PC-9 (cell line): ENCODE measurements at regions of chr6 and their contacts with region 1.

Region 1: DNA sequence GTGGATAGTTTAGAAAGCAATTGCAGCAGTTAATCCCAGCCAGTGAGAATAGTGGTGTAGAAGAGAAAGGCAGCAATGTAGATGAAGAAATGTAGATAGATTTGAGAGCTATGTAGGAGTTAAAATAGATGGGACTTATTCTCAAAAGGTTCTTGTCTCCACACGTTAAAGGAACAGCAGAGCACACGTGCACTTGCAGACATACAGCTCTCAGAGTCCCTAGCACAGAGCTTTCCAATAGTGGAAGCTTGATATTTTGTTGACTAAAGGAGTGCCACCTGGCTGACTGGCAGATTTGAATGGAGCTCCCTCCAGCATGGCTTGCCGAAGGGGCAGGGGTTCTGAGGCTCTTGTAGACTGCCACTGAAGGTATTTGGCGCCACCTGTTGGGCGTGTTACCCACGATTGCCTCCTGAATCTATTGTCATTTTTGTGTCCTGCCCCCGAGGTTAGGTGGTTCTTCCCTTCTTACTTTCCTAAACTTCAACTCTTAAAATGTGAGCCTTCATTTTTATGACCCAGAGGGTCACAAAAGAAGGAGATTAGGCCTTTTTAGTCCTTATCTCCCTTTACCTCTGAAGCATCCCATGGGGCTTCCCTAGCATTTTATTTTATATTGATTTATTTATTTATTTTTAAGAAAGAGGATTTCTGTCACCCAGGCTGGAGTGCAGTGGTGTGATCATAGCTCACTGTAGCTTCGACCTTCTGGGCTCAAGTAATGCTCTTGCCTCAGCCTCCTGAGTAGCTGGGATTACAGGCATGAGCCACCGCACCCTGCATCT is 16.4 kb downstream of the BRD2 start:
- DNase-seq: peak; percentile 85
- H3K4me3 ChIP-seq: no peak overlapping the region
- H3K27ac ChIP-seq: no peak overlapping the region
- H3K4me1 ChIP-seq: 0 out of 2 replicates have a peak, but pooled peaks cover 4% of the 10 kb centered on the region
- H3K27me3 ChIP-seq: 0 out of 2 replicates have a peak, but pooled peaks cover 18% of the 10 kb centered on the region
- CTCF ChIP-seq: peak; percentile 89

Region 2: DNA sequence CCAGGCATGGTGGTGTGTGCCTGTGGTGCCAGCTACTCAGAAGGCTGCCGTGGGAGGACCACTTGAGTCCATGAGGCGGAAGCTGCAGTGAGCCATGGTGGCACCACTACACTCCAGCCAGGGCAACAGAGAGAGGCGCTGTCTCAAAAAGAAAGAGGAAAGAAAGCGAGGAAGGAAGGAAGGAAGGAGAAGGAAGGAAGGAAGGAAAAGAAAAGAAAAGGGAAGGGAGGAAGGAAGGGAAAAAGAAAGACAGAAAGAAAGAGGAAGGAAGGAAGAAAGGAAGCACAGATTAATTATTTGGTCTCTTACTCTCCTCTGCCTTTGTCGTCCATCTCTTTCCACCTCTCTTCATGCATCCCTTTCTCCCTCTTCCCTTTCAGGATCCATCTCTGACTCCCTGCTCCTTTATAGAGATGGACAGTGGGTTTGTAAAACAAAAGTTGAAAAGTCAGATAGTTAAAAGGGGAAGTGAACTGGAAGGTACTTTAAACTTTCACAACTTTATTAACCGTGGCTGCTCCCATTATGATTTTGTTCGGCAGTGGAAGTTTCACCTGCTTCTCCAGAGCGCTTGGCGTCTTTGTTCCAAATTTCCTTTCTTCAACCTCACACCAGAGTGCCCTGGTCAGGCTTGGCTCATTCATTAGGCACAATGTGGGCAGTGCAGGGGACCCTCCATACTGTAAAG is 346.1 kb before region 1 on chr6:
- CTCF ChIA-PET with region 1: no interaction called
- POLR2A ChIA-PET with region 1: no interaction called
- intact Hi-C with region 1: no loop called
- DNase-seq: no peak
- H3K4me3 ChIP-seq: no peak overlapping the region
- H3K27ac ChIP-seq: no peak overlapping the region
- H3K4me1 ChIP-seq: no peaks in the 10 kb centered on the region
- H3K27me3 ChIP-seq: peaks cover 25% of the 10 kb centered on the region
- CTCF ChIP-seq: no peak

Region 3: GRCh38 chr6:32885698-32886286 is 99.0 kb before region 1 on chr6:
- CTCF ChIA-PET with region 1: interaction called, 8 read pairs
- POLR2A ChIA-PET with region 1: interaction called, 5 read pairs
- intact Hi-C with region 1: loop called (anchors 1 kb)
- DNase-seq: peak in 1 of 2 experiments; percentile 54
- H3K4me3 ChIP-seq: no peak overlapping the region
- H3K27ac ChIP-seq: no peak overlapping the region
- H3K4me1 ChIP-seq: no peaks in the 10 kb centered on the region
- H3K27me3 ChIP-seq: 0 out of 2 replicates have a peak, but pooled peaks cover 7% of the 10 kb centered on the region
- CTCF ChIP-seq: peak; percentile 82

Region 4: DNA sequence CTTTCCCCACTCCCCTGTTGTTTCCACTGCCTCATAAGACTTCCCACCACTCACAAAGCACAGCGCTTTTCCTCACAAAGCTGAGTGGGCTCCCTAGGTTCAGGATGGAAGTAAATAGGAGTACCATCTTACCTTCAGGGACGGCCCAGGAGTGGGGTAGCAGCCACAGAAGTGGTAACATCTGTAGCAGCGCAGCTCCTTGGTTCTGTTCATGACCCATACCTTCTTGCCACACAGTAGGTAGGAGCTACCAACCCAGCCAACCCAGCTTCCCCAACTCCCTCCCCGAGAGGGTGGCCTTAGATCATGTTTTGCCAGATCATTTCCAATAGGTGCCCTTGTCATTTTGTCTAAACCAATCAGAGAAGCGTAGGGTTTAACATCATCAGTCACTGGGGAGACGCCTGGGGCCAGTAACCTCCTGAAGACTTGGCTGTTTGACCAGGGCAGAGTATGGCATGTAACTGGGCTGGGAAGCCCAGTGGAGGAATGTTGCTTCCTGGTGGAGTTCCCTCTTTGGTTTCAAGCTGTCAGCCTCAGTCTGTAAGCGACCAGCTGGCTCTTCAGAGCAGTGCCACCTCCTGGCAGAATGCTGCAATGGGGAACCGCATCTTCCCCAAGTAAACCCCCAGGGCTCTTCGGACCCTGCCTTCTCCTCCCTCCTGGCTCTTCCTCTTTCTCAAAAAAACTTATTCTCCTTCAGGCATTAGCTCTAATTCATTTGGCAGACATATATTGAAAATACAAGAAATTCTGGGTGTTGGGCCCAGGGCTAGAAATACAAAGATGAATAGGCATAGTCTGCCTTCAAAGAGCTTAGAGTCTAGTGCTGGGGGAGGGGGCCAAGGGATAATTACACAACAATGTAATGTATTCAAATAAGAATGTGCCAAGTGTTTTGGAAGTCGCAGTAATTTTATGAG is 31.7 kb before region 1 on chr6 and contains the start of gene HLA-DMA:
- CTCF ChIA-PET with region 1: interaction called, 18 read pairs
- POLR2A ChIA-PET with region 1: interaction called, 3 read pairs
- intact Hi-C with region 1: no loop called
- DNase-seq: peak; percentile 88 to 94
- H3K4me3 ChIP-seq: no peak within 1 kb of the TSS
- H3K27ac ChIP-seq: no peak within 1 kb of the TSS
- H3K4me1 ChIP-seq: peaks cover 4% of the 10 kb centered on the region
- H3K27me3 ChIP-seq: no peaks in the 10 kb centered on the region
- CTCF ChIP-seq: peak; percentile 81
- total RNA-seq, gene HLA-DMA: 18.3 and 22.1 TPM in 2 replicates

Region 5: DNA sequence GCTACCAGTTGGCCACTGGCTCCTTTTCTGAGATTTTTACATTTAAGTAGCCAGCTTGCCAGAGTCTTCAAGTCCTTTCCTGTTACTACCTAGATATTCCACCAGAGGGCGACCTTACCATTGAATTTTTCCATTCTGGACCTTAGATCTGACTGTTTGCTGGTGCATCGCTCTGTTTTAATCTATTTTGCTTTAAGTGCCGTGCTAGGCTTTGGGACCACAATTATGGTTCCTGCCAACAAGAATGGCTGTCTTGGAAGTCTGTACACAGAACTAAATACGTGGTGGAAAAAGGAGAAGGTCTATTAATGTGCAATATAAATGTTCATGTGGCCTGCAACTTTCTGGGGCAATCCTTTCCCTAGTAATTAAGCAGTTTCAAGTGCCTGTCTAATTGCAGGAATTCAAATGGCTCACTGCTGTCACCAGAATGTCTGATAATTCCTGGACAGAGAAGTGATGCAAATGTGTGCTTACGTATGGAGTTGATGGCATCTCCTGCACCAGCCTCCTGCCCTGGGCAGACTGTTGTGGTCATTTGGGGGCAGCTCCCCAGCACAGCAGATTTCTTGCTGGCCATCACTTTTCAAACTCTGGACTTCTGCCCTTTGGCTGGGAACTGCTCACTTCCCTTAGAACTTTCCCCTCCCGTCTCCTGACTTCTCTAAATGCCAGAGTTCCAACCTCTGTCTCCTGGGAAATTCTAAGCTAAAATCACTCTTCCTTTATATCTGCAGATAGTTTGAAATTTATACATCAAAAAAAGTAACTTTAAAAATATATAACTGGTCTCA is 30.2 kb after region 1 on chr6:
- CTCF ChIA-PET with region 1: no interaction called
- POLR2A ChIA-PET with region 1: no interaction called
- intact Hi-C with region 1: no loop called
- DNase-seq: peak; percentile 45 to 52
- H3K4me3 ChIP-seq: no peak overlapping the region
- H3K27ac ChIP-seq: no peak overlapping the region
- H3K4me1 ChIP-seq: no peaks in the 10 kb centered on the region
- H3K27me3 ChIP-seq: peaks cover 93% of the 10 kb centered on the region
- CTCF ChIP-seq: peak; percentile 85